Activated CD8-positive, alpha-beta T cell treated with anti-CD3 and anti-CD28 coated beads, Interleukin-2, amount 10 ng/mL, durations not matched to agents 7 days and 5 days (primary cell): ENCODE measurements at regions of chr1 and their contacts with region 1.

Region 1: GRCh38 chr1:171741872-171742576 is at the start of gene VAMP4:
- DNase-seq: peak; percentile 90
- ATAC-seq: peak; percentile 97
- H3K4me3 Mint-ChIP-seq: peak within 1 kb of the TSS; percentile 98
- H3K27ac Mint-ChIP-seq: peak within 1 kb of the TSS; percentile 99
- H3K4me1 Mint-ChIP-seq: peaks cover 49% of the 10 kb centered on the region
- H3K27me3 Mint-ChIP-seq: no peaks in the 10 kb centered on the region
- total RNA-seq, gene VAMP4: 12.2 to 13.0 TPM

Region 2: DNA sequence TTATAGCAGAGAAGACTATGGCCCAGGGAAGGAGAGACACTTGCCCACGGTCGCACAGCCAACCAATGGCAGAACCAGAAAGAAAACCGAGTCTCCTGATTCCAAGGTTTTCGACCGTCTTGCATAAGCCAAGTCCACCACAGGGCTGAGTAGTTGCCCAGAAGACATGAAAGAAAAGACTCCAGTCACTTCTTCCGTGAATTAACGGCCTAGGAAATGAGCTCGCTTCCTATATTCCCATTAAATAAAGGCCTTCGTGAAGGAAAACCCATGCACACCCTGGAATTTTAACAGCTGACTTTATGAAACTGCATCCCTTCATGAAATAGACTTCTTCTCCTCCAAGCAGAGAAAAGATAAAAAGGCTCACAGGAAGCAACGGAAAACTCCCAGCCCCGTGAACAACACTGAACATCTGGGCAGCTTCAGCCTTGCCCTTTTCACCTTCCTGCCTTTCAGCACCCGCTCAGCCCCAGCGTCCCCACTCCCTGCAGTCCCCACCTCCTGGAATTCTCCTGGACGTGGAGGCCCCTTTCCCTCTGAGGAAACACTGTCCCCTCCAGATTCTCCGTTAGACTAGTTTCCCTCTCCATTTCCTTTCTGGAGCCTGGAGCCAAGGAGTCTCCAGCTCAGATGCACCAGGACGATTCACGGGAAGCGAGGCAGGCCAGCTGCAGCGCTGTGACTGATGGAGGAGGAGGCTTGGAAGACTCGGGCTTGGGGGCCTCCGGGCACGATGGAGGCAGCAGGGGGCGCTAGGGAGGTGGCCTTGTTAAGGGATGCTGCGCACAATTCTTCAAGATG is 86.9 kb before region 1 on chr1:
- CTCF ChIA-PET with region 1: interaction called, 12 read pairs
- POLR2A ChIA-PET with region 1: interaction called, 5 read pairs
- DNase-seq: peak; percentile 76
- ATAC-seq: peak; percentile 78
- H3K4me3 Mint-ChIP-seq: no peak overlapping the region
- H3K27ac Mint-ChIP-seq: no peak overlapping the region
- H3K4me1 Mint-ChIP-seq: peaks cover 13% of the 10 kb centered on the region
- H3K27me3 Mint-ChIP-seq: peaks cover 32% of the 10 kb centered on the region

Region 3: GRCh38 chr1:171781176-171781875 is 39.3 kb after region 1 on chr1 and contains the start of gene METTL13:
- CTCF ChIA-PET with region 1: interaction called, 17 read pairs
- POLR2A ChIA-PET with region 1: interaction called, 35 read pairs
- DNase-seq: peak; percentile 99
- ATAC-seq: peak; percentile 98
- H3K4me3 Mint-ChIP-seq: peak within 1 kb of the TSS; percentile 95
- H3K27ac Mint-ChIP-seq: peak within 1 kb of the TSS; percentile 96
- H3K4me1 Mint-ChIP-seq: peaks cover 58% of the 10 kb centered on the region
- H3K27me3 Mint-ChIP-seq: no peaks in the 10 kb centered on the region
- total RNA-seq, gene METTL13: 38.5 to 44.5 TPM